Endothelial cell of umbilical vein (primary cell): ENCODE measurements at regions of chr18 and their contacts with region 1.

Region 1: GRCh38 chr18:74342416-74343043 is 26.9 kb downstream of the C18orf63 start:
- DNase-seq: peak; percentile 67
- H3K4me3 ChIP-seq: no peak overlapping the region
- H3K27ac ChIP-seq: no peak overlapping the region
- H3K4me1 ChIP-seq: no peaks in the 10 kb centered on the region
- H3K27me3 ChIP-seq: peaks cover 0 to 7% of the 10 kb centered on the region in 2 experiments
- CTCF ChIP-seq: peak; percentile 24 to 25
- POLR2A ChIP-seq: no peak

Region 2: DNA sequence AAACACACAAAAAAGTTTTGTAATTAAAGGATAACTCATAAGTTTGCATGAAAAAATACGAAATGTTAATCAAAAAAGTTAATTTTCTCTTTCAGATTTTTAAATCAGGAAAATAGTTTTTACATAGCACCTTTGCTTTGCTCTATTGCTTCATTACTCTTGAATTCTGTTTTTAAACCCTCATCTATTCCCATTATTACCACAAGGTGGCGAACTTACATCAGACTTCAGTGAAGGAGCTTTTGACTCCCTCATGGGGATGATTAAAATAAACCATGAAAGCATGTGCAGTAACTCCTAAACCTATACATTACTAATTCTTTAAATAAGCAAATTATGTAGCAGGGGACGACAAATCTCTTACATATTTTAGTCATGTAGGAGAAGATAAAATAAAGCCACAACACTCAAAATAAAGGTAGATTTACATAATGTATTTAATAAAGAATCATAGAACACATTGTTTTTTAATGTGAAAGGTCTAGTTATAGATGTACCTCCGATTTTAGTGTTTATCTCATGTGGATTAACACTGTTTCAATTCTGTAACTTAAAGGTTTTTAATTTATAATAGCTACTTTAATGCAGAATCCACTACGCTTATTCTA is 1579.9 kb before region 1 on chr18:
- CTCF ChIA-PET with region 1: interaction called, 39 read pairs
- POLR2A ChIA-PET with region 1: interaction called, 3 read pairs
- dilution Hi-C with region 1: no loop called
- intact Hi-C with region 1: no loop called
- DNase-seq: peak; percentile 36
- H3K4me3 ChIP-seq: no peak overlapping the region
- H3K27ac ChIP-seq: no peak overlapping the region
- H3K4me1 ChIP-seq: no peaks in the 10 kb centered on the region
- H3K27me3 ChIP-seq: no peaks in the 10 kb centered on the region
- CTCF ChIP-seq: peak; percentile 33 to 42
- POLR2A ChIP-seq: no peak

Region 3: DNA sequence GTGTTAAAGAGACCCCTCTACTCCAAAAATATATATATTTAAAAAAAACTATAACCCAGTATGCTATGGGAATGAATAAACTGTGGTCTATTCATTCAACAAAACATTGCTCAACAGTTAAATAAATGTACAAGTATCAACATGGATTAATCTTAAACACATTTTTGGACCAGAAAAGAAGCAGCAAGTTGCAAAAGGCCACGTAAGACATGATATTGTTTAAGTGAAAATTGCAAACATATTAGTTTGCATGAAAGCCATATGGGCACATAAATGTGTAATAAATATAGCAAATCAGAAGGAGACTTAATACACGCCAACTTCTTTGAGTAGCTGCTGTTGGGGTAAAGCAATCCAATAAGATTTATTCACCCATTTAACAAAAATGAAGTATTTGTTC is 516.4 kb before region 1 on chr18:
- CTCF ChIA-PET with region 1: no interaction called
- POLR2A ChIA-PET with region 1: no interaction called
- dilution Hi-C with region 1: no loop called
- intact Hi-C with region 1: no loop called
- DNase-seq: no peak
- H3K4me3 ChIP-seq: no peak overlapping the region
- H3K27ac ChIP-seq: no peak overlapping the region
- H3K4me1 ChIP-seq: no peaks in the 10 kb centered on the region
- H3K27me3 ChIP-seq: no peaks in the 10 kb centered on the region
- CTCF ChIP-seq: no peak
- POLR2A ChIP-seq: no peak

Region 4: GRCh38 chr18:74147779-74148542 is 194.6 kb before region 1 on chr18 and contains the starts of genes FBXO15 and TIMM21:
- CTCF ChIA-PET with region 1: no interaction called
- POLR2A ChIA-PET with region 1: no interaction called
- dilution Hi-C with region 1: no loop called
- intact Hi-C with region 1: no loop called
- DNase-seq: peak; percentile 99
- H3K4me3 ChIP-seq: peak within 1 kb of the TSS; percentile 79 to 95 (median 85)
- H3K27ac ChIP-seq: peak within 1 kb of the TSS; percentile 47
- H3K4me1 ChIP-seq: peaks cover 17% of the 10 kb centered on the region
- H3K27me3 ChIP-seq: no peaks in the 10 kb centered on the region
- CTCF ChIP-seq: no peak
- POLR2A ChIP-seq: peak; percentile 81
- total RNA-seq, gene FBXO15: not detected in 2 replicates
- total RNA-seq, gene TIMM21: 36.7 and 38.9 TPM in 2 replicates

Region 5: DNA sequence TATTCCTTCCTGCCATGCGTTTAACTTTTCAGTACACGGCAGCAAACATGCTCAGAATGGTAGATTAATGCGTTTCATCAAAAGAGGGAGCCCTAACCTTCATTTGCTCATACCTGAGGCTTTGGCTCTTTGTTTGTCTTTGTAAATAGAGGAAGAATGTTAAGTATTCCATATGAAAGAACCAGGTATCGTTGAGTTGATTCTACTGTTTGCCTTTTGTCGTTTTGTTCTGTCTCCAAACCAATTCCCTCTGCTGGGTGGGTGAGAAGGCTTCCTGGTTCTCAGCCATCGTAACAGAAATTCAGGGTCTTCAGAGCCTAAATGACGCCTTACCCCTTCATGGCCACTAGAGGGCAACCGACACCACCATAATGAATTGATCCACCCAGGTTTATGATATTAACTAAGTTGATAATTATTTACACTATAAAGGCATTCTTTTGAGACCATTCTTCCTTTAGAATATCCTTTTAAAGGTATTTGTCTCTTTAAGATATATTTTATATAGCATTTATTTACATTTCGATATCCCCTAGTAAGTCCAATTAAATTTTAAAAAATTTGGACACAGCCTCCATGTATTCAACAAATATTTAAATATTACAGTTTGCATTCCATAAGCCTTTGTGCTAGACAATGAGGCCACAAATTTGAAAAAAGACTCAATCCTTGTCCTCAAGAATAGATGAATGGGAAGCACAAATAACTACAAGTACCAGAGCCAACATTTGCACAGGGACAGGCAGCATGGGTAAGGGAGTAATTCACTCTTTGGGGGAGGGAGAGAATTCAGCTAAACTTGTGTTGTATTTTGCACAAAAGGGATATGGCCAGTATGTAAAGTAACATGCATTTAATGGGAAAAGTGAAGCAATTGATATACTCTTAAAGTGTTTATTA is 146.1 kb before region 1 on chr18:
- CTCF ChIA-PET with region 1: interaction called, 130 read pairs
- POLR2A ChIA-PET with region 1: no interaction called
- dilution Hi-C with region 1: no loop called
- intact Hi-C with region 1: loop called (anchors 1 kb)
- DNase-seq: peak; percentile 78
- H3K4me3 ChIP-seq: peak overlapping the region in 2 of 3 experiments; percentile 14 to 48
- H3K27ac ChIP-seq: no peak overlapping the region
- H3K4me1 ChIP-seq: no peaks in the 10 kb centered on the region
- H3K27me3 ChIP-seq: peaks cover 0 to 3% of the 10 kb centered on the region in 2 experiments
- CTCF ChIP-seq: peak; percentile 62 to 86
- POLR2A ChIP-seq: no peak

Region 6: GRCh38 chr18:74311000-74311399 is 31.5 kb before region 1 on chr18:
- CTCF ChIA-PET with region 1: interaction called, 10 read pairs
- POLR2A ChIA-PET with region 1: no interaction called
- dilution Hi-C with region 1: no loop called
- intact Hi-C with region 1: no loop called
- DNase-seq: no peak
- H3K4me3 ChIP-seq: no peak overlapping the region
- H3K27ac ChIP-seq: no peak overlapping the region
- H3K4me1 ChIP-seq: no peaks in the 10 kb centered on the region
- H3K27me3 ChIP-seq: peaks cover 0 to 8% of the 10 kb centered on the region in 2 experiments
- CTCF ChIP-seq: no peak
- POLR2A ChIP-seq: no peak

Region 7: GRCh38 chr18:74353169-74353775 is 10.7 kb after region 1 on chr18:
- CTCF ChIA-PET with region 1: interaction called, 23 read pairs
- POLR2A ChIA-PET with region 1: no interaction called
- dilution Hi-C with region 1: no loop called
- intact Hi-C with region 1: no loop called
- DNase-seq: peak; percentile 53
- H3K4me3 ChIP-seq: no peak overlapping the region
- H3K27ac ChIP-seq: no peak overlapping the region
- H3K4me1 ChIP-seq: no peaks in the 10 kb centered on the region
- H3K27me3 ChIP-seq: peaks cover 1 to 15% of the 10 kb centered on the region in 2 experiments
- CTCF ChIP-seq: peak; percentile 40 to 62
- POLR2A ChIP-seq: no peak